ENCODE measurements at regions of chr5 and their contacts with region 1.

Region 1: GRCh38 chr5:107753427-107753826 is 82.7 kb upstream of the EFNA5 start:
- DNase-seq: no peak
- H3K4me3 ChIP-seq: no peak overlapping the region
- H3K27ac ChIP-seq: no peak overlapping the region
- H3K4me1 ChIP-seq: no peaks in the 10 kb centered on the region
- H3K27me3 ChIP-seq: no peaks in the 10 kb centered on the region
- CTCF ChIP-seq: no peak

Region 2: GRCh38 chr5:105977637-105978390 is 1775.6 kb before region 1 on chr5:
- CTCF ChIA-PET with region 1: no interaction called
- POLR2A ChIA-PET with region 1: interaction called, 20 read pairs
- intact Hi-C with region 1: no loop called
- DNase-seq: no peak
- H3K4me3 ChIP-seq: no peak overlapping the region
- H3K27ac ChIP-seq: no peak overlapping the region
- H3K4me1 ChIP-seq: 0 out of 2 replicates have a peak, but pooled peaks cover 7% of the 10 kb centered on the region
- H3K27me3 ChIP-seq: no peaks in the 10 kb centered on the region
- CTCF ChIP-seq: no peak

Region 3: DNA sequence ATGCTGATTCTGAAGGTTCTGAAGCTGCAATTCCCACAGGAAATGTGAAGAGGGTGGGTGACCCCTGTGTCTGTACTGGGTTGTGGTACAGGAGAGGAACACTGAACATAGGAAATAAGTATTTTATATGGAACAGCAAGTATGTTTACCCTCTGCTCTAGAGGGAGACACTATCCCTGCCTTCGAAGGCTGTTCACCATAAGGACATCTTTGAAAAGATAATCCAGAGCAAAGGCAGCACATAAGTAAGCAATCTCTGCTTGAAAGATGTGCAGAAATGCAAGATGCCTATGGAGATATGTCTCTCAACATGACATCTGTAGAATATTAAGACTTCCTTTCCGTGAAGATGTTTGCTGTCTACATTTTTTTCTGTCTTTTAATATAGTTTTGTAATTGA is 101.7 kb after region 1 on chr5:
- CTCF ChIA-PET with region 1: no interaction called
- POLR2A ChIA-PET with region 1: no interaction called
- intact Hi-C with region 1: no loop called
- DNase-seq: no peak
- H3K4me3 ChIP-seq: no peak overlapping the region
- H3K27ac ChIP-seq: no peak overlapping the region
- H3K4me1 ChIP-seq: no peaks in the 10 kb centered on the region
- H3K27me3 ChIP-seq: no peaks in the 10 kb centered on the region
- CTCF ChIP-seq: no peak

Measured in PC-9 (cell line).